ENCODE measurements at regions of chr7 and their contacts with region 1.

Region 1: GRCh38 chr7:100407285-100408180 is 21.0 kb downstream of the ZCWPW1 start:
- DNase-seq: peak; percentile 57 to 63 (median 58)
- H3K4me3 ChIP-seq: no peak overlapping the region
- H3K4me3 Mint-ChIP-seq: no peak overlapping the region
- H3K27ac ChIP-seq: no peak overlapping the region
- H3K27ac Mint-ChIP-seq: no peak overlapping the region
- H3K4me1 ChIP-seq: peaks cover 4% of the 10 kb centered on the region
- H3K4me1 Mint-ChIP-seq: peaks cover 0 to 5% (median 2%) of the 10 kb centered on the region in 4 donors
- H3K27me3 ChIP-seq: no peaks in the 10 kb centered on the region
- H3K27me3 Mint-ChIP-seq: no peaks in the 10 kb centered on the region

Region 2: DNA sequence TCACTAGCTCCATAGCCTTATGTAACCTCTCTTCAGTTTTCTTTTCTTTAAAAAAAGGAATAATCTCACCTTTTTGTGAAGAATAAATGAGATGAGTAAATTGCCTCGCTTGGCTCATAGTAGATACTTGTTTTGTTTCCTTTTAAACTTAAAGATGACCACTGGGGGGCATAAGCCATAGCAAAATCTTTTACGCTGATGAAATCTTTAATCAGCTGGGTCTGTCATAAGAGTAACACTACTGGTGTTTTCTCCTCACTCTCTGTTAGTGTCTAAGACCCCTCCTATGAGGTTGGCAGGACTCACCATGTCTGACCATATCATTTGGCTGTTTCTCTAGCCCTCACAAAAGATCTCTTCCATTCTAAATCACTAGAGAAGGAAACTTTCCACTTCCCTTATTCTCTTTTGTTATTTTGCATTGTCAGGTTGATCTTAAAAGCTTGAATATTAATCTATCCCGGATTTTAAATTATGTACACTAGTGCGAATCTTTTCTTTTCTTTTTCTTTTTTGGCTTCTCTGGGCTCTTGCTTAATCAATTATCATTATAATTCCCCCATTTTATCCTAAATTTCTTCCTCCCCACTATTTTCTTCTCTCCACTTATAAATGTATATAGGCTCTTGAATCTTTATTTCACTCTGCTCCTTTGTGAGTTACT is 217.4 kb before region 1 on chr7:
- CTCF ChIA-PET with region 1: interaction called, 7 read pairs
- POLR2A ChIA-PET with region 1: no interaction called
- intact Hi-C with region 1: loop called (anchors 1 kb)
- DNase-seq: peak in 4 of 5 donors; percentile 48 to 59 (median 57)
- H3K4me3 ChIP-seq: no peak overlapping the region
- H3K4me3 Mint-ChIP-seq: no peak overlapping the region
- H3K27ac ChIP-seq: no peak overlapping the region
- H3K27ac Mint-ChIP-seq: peak overlapping the region in 6 of 7 donors; percentile 0 to 69 (median 30)
- H3K4me1 ChIP-seq: no peaks in the 10 kb centered on the region
- H3K4me1 Mint-ChIP-seq: peaks cover 3 to 6% (median 5%) of the 10 kb centered on the region in 4 donors
- H3K27me3 ChIP-seq: no peaks in the 10 kb centered on the region
- H3K27me3 Mint-ChIP-seq: no peaks in the 10 kb centered on the region

Region 3: DNA sequence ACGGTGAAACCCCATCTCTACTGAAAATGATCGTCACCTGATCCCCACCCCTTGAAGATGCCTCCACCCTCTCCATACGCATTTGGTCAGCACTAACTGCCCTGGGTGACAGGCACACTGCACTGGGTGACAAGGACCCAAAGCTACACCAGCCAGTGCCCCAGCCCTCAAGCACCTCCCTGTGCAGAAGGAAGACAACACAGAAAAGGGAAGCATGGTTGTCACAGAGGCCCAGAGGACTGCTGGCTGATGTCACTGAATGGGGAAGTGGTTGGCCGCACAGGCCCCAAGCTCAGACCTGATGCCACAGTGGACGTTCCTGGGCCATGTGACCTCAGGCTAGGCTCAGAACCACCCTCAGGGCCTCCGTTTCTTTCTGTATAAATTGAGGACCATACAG is 38.4 kb before region 1 on chr7:
- CTCF ChIA-PET with region 1: no interaction called
- POLR2A ChIA-PET with region 1: no interaction called
- intact Hi-C with region 1: loop called (anchors 5 kb)
- DNase-seq: no peak
- H3K4me3 ChIP-seq: no peak overlapping the region
- H3K4me3 Mint-ChIP-seq: no peak overlapping the region
- H3K27ac ChIP-seq: no peak overlapping the region
- H3K27ac Mint-ChIP-seq: peak overlapping the region in 1 of 7 donors; percentile 64
- H3K4me1 ChIP-seq: peaks cover 15% of the 10 kb centered on the region
- H3K4me1 Mint-ChIP-seq: peaks cover 10 to 30% (median 21%) of the 10 kb centered on the region in 4 donors
- H3K27me3 ChIP-seq: no peaks in the 10 kb centered on the region
- H3K27me3 Mint-ChIP-seq: no peaks in the 10 kb centered on the region

Region 4: DNA sequence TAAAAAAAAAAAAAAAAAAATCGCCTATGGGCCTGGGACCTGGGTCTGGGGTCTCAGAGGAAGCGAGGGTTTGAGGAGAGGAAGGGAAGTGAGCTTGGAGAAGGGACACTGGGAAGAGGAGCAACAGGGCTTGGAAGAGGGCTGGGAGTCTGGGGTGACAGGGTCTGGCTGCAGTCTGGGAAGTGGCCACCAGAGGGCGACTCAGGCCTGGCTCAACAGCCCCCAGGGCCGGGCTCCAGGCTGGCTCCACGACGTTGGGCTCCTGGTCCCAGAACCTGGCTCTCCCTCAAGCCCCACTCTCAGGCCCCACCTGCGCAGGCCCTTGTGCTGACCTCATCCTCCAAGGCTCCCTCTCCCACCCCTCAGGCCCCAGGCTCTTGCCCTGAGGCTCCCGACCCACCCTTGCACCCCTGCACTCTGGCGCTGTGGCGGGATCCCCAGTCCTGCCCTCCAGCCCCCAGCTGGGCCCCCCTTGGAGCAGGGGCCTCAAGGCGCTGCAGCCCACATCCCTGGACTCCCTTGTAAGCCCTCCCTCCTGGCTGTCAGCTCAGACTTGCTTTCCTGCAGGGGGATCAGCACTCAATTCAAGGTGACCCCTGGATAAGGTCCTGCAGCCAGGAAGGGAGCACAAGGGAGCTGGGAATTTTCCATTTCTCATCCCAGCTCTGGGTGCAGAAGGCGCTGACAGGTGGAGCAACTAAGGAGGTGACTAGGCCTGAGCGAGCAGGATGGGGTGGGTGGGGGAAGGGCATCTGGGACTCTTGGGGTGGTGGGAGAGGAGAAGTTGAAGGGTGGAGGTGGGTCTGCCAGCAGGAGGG is 61.9 kb after region 1 on chr7:
- CTCF ChIA-PET with region 1: no interaction called
- POLR2A ChIA-PET with region 1: no interaction called
- intact Hi-C with region 1: no loop called
- DNase-seq: peak; percentile 71 to 78 (median 72)
- H3K4me3 ChIP-seq: no peak overlapping the region
- H3K4me3 Mint-ChIP-seq: no peak overlapping the region
- H3K27ac ChIP-seq: no peak overlapping the region
- H3K27ac Mint-ChIP-seq: peak overlapping the region; percentile 57 to 87 (median 70)
- H3K4me1 ChIP-seq: peaks cover 26% of the 10 kb centered on the region
- H3K4me1 Mint-ChIP-seq: peaks cover 17 to 37% (median 27%) of the 10 kb centered on the region in 4 donors
- H3K27me3 ChIP-seq: no peaks in the 10 kb centered on the region
- H3K27me3 Mint-ChIP-seq: no peaks in the 10 kb centered on the region

Region 5: DNA sequence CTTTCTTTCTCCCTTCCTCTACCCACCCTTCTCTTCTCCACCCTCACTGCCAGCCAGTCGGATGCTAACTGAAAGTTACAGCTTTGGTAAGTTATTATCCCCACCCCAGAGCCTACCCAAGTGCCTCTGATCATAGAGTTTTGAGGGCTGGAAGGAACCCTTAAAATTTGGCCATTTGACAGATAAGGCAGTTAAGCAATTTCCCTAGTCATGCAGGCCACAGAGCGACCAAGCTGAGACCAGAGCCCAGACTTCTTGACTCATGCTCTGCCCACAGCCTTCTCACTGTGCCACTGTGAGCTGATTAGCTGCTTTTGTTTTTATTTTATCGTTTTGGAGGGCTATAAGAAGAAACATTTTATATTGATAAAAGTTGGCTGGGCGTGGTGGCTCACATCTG is 149.0 kb after region 1 on chr7:
- CTCF ChIA-PET with region 1: no interaction called
- POLR2A ChIA-PET with region 1: no interaction called
- intact Hi-C with region 1: no loop called
- DNase-seq: no peak
- H3K4me3 ChIP-seq: no peak overlapping the region
- H3K4me3 Mint-ChIP-seq: no peak overlapping the region
- H3K27ac ChIP-seq: no peak overlapping the region
- H3K27ac Mint-ChIP-seq: peak overlapping the region in 4 of 7 donors; percentile 12 to 82 (median 62)
- H3K4me1 ChIP-seq: peaks cover 12% of the 10 kb centered on the region
- H3K4me1 Mint-ChIP-seq: peaks cover 8 to 26% (median 13%) of the 10 kb centered on the region in 4 donors
- H3K27me3 ChIP-seq: no peaks in the 10 kb centered on the region
- H3K27me3 Mint-ChIP-seq: no peaks in the 10 kb centered on the region

Measured in CD4-positive, alpha-beta memory T cell (primary cell).